Ascending aorta (tissue), 2 donors: ENCODE measurements at regions of chr6 and their contacts with region 1.

Region 1: DNA sequence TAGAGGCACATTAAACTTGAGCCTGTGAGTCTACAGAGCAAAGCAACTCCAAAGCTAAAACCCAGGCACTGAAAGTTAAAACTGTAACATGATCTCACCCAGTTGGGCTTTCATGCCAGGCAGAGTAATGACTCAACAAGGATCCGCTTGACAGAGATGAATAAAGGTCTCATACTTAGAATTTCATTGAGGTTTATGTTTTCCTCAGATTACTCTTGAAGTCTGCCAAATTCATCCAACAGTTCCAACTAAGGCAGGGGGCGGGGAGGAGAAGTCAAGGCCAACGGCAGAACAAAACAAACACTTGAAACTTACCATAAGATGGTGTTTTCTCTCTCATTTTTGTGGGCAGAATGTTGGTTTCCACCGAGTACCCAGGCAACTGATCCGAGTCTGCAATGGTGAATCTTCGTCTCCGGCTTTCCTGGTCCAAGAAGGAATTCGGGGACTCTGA is 54.0 kb upstream of the IPCEF1 start:
- DNase-seq: peak in 1 of 2 donors; percentile 86
- H3K4me3 ChIP-seq: peak overlapping the region; percentile 11 to 21
- H3K27ac ChIP-seq: peak overlapping the region; percentile 88
- H3K4me1 ChIP-seq: peaks cover 10 to 32% of the 10 kb centered on the region in 2 donors
- H3K27me3 ChIP-seq: no peaks in the 10 kb centered on the region
- CTCF ChIP-seq: no peak

Region 2: GRCh38 chr6:154156135-154156896 is 254.3 kb before region 1 on chr6:
- intact Hi-C with region 1: loop called (anchors 2 kb)
- DNase-seq: no peak
- H3K4me3 ChIP-seq: no peak overlapping the region
- H3K27ac ChIP-seq: no peak overlapping the region
- H3K4me1 ChIP-seq: peaks cover 0 to 3% of the 10 kb centered on the region in 2 donors
- H3K27me3 ChIP-seq: no peaks in the 10 kb centered on the region
- CTCF ChIP-seq: peak; percentile 29 to 50 (median 31)

Region 3: GRCh38 chr6:154234019-154234772 is 176.4 kb before region 1 on chr6:
- intact Hi-C with region 1: no loop called
- DNase-seq: no peak
- H3K4me3 ChIP-seq: no peak overlapping the region
- H3K27ac ChIP-seq: no peak overlapping the region
- H3K4me1 ChIP-seq: no peaks in the 10 kb centered on the region
- H3K27me3 ChIP-seq: no peaks in the 10 kb centered on the region
- CTCF ChIP-seq: no peak

Region 4: GRCh38 chr6:154432533-154433476 is 22.2 kb after region 1 on chr6:
- intact Hi-C with region 1: loop called (anchors 2 kb)
- DNase-seq: no peak
- H3K4me3 ChIP-seq: no peak overlapping the region
- H3K27ac ChIP-seq: peak overlapping the region; percentile 76 to 78
- H3K4me1 ChIP-seq: peaks cover 0 to 28% of the 10 kb centered on the region in 2 donors
- H3K27me3 ChIP-seq: no peaks in the 10 kb centered on the region
- CTCF ChIP-seq: no peak

Region 5: DNA sequence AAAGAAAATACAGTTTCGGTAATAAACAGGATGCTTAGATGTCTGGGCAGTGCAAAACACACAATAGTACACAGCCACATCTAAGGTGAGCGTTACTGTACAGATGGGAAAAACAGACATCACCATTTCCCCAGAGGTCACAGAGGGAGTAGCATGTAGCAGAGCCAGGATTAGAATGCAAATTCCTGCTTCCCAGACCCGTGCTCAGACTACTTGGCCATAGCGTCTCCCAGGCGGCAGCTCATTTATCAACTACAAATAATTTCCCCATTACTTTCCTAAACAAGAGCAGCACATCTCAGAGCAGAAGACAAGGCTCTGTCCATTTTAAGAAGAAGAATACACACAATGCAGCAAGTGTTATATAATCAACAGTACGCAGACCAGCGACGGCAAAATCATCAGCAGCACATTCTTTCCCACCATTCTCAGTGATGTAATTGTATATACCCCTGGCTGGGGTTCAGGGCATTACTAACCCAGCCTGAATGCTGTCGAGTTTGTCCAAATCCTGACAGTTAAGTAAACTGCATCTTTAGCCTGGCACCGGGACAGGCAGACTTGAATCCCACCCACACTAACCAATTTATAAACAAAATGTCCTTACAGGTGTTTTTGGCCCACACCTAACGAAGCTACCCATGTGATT is 37.9 kb after region 1 on chr6:
- intact Hi-C with region 1: loop called (anchors 2 kb)
- DNase-seq: peak in 1 of 2 donors; percentile 77
- H3K4me3 ChIP-seq: peak overlapping the region in 1 of 2 donors; percentile 49
- H3K27ac ChIP-seq: peak overlapping the region; percentile 43 to 64
- H3K4me1 ChIP-seq: peaks cover 0 to 27% of the 10 kb centered on the region in 2 donors
- H3K27me3 ChIP-seq: no peaks in the 10 kb centered on the region
- CTCF ChIP-seq: peak; percentile 15 to 28 (median 18)

Region 6: GRCh38 chr6:154488802-154489437 is 78.3 kb after region 1 on chr6:
- intact Hi-C with region 1: loop called (anchors 5 kb)
- DNase-seq: no peak
- H3K4me3 ChIP-seq: peak overlapping the region in 1 of 2 donors; percentile 28
- H3K27ac ChIP-seq: peak overlapping the region; percentile 60 to 71
- H3K4me1 ChIP-seq: peaks cover 12 to 58% of the 10 kb centered on the region in 2 donors
- H3K27me3 ChIP-seq: no peaks in the 10 kb centered on the region
- CTCF ChIP-seq: no peak

Region 7: DNA sequence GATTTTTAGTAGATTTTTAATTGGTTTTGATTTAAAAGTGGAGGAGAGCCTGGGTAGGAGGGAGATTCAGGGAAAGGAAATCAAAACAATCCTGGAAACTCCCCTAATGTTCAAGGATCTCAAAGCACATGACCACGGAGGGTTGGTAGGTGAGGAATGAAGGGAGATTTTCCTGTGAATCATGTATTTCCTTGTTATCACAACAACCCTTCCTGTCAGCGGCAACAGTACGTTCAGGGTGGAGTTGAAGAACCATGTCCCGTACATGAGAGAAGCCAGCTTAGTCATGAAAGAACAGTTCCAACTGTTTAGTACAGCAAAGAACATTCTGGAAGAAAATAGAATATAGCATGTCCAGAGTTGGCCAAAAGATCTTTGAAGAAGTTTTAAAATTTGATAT is 243.2 kb after region 1 on chr6:
- intact Hi-C with region 1: loop called (anchors 1 kb)
- DNase-seq: peak; percentile 16 to 70
- H3K4me3 ChIP-seq: no peak overlapping the region
- H3K27ac ChIP-seq: peak overlapping the region; percentile 57
- H3K4me1 ChIP-seq: peaks cover 4 to 13% of the 10 kb centered on the region in 2 donors
- H3K27me3 ChIP-seq: no peaks in the 10 kb centered on the region
- CTCF ChIP-seq: no peak